MCF 10A (cell line): ENCODE measurements at regions of chr20 and their contacts with region 1.

Region 1: GRCh38 chr20:41339507-41340326 is 904 bp upstream of the LPIN3 start:
- DNase-seq: peak; percentile 89
- H3K4me3 Mint-ChIP-seq: peak overlapping the region; percentile 80
- H3K27ac Mint-ChIP-seq: peak overlapping the region; percentile 96
- H3K4me1 Mint-ChIP-seq: peaks cover 33% of the 10 kb centered on the region
- H3K27me3 Mint-ChIP-seq: no peaks in the 10 kb centered on the region
- CTCF ChIP-seq: peak; percentile 99

Region 2: DNA sequence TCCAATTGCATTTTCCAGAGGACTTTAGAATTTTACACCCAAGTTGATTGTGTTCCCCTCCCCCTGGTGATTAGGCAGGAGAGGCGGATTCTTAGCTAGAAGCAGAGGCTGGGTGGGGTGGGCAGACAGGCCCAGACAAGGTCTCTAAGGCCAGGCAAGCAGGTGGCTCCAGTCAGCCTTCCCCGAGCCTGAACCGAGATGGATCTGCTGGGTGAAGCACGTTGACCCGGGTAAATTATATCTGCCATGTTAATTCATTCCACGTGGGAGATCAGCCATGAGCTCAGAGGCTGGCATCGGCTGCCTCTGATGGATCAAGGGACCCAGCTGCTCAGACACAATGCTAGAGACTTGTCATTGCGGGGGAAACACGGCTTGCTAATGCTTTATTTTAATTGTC is 491.2 kb before region 1 on chr20:
- CTCF ChIA-PET with region 1: no interaction called
- POLR2A ChIA-PET with region 1: no interaction called
- intact Hi-C with region 1: no loop called
- DNase-seq: no peak
- H3K4me3 Mint-ChIP-seq: no peak overlapping the region
- H3K27ac Mint-ChIP-seq: no peak overlapping the region
- H3K4me1 Mint-ChIP-seq: no peaks in the 10 kb centered on the region
- H3K27me3 Mint-ChIP-seq: no peaks in the 10 kb centered on the region
- CTCF ChIP-seq: no peak

Region 3: GRCh38 chr20:41136680-41137613 is 202.8 kb before region 1 on chr20 and contains the start of gene PLCG1:
- CTCF ChIA-PET with region 1: interaction called, 110 read pairs
- POLR2A ChIA-PET with region 1: interaction called, 63 read pairs
- intact Hi-C with region 1: loop called (anchors 1 kb)
- DNase-seq: peak; percentile 83
- H3K4me3 Mint-ChIP-seq: peak within 1 kb of the TSS; percentile 79
- H3K27ac Mint-ChIP-seq: peak within 1 kb of the TSS; percentile 42
- H3K4me1 Mint-ChIP-seq: peaks cover 61% of the 10 kb centered on the region
- H3K27me3 Mint-ChIP-seq: no peaks in the 10 kb centered on the region
- CTCF ChIP-seq: no peak
- total RNA-seq, gene PLCG1: 33.2 and 48.1 TPM in 2 replicates

Region 4: GRCh38 chr20:41200446-41201202 is 139.1 kb before region 1 on chr20:
- CTCF ChIA-PET with region 1: interaction called, 10 read pairs
- POLR2A ChIA-PET with region 1: interaction called, 3 read pairs
- intact Hi-C with region 1: no loop called
- DNase-seq: no peak
- H3K4me3 Mint-ChIP-seq: no peak overlapping the region
- H3K27ac Mint-ChIP-seq: no peak overlapping the region
- H3K4me1 Mint-ChIP-seq: no peaks in the 10 kb centered on the region
- H3K27me3 Mint-ChIP-seq: no peaks in the 10 kb centered on the region
- CTCF ChIP-seq: no peak

Region 5: GRCh38 chr20:41249406-41250281 is 90.1 kb before region 1 on chr20:
- CTCF ChIA-PET with region 1: interaction called, 37 read pairs
- POLR2A ChIA-PET with region 1: interaction called, 7 read pairs
- intact Hi-C with region 1: loop called (anchors 1 kb)
- DNase-seq: peak; percentile 82
- H3K4me3 Mint-ChIP-seq: peak overlapping the region; percentile 26
- H3K27ac Mint-ChIP-seq: peak overlapping the region; percentile 97
- H3K4me1 Mint-ChIP-seq: peaks cover 41% of the 10 kb centered on the region
- H3K27me3 Mint-ChIP-seq: no peaks in the 10 kb centered on the region
- CTCF ChIP-seq: peak; percentile 21

Region 6: GRCh38 chr20:41329435-41330342 is 10.0 kb before region 1 on chr20:
- CTCF ChIA-PET with region 1: interaction called, 59 read pairs
- POLR2A ChIA-PET with region 1: interaction called, 48 read pairs
- intact Hi-C with region 1: no loop called
- DNase-seq: peak; percentile 92
- H3K4me3 Mint-ChIP-seq: peak overlapping the region; percentile 28
- H3K27ac Mint-ChIP-seq: peak overlapping the region; percentile 89
- H3K4me1 Mint-ChIP-seq: peaks cover 15% of the 10 kb centered on the region
- H3K27me3 Mint-ChIP-seq: no peaks in the 10 kb centered on the region
- CTCF ChIP-seq: no peak

Region 7: DNA sequence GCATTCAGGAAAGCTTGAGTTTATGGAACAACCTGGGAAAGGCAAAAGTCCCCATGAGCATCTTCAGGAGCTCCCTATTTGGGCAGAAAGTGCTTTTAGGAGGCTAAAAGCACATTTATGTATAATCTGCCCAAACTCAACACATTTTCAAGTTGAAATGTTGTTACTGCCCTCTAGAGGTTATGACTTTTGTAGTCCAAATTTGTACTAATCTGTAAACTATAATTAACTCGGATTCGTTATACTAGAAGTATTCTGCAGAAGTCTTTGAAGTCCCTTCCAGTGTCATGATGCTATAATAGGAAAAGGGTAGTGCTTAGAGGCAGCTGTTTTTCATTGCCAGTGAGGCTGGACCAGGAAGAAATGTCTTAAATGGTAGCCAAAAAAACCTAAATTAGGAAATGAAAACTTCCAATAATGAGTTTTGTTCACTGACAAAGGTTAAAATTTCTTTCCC is 71.7 kb after region 1 on chr20:
- CTCF ChIA-PET with region 1: interaction called, 22 read pairs
- POLR2A ChIA-PET with region 1: no interaction called
- intact Hi-C with region 1: loop called (anchors 1 kb)
- DNase-seq: peak; percentile 9
- H3K4me3 Mint-ChIP-seq: no peak overlapping the region
- H3K27ac Mint-ChIP-seq: no peak overlapping the region
- H3K4me1 Mint-ChIP-seq: no peaks in the 10 kb centered on the region
- H3K27me3 Mint-ChIP-seq: no peaks in the 10 kb centered on the region
- CTCF ChIP-seq: peak; percentile 41

Region 8: DNA sequence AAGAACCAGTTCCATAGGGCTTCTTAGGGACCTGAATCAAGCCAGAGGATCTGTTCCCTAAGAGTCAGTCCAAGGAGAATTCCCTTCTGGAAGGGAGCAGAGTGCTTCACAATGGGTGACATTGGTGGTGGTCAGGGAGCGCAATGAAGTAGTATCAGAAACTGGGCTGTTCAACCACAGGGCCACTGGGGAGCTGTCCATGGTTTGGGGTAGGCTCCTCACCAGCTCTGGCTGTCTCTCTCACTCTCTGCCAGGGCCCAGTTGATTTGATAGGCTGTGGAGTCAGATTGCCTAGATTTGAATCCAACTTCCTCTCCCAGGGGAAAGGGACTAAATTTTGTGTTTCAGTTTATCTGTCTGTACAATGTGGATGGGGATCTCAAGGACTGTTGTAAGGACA is 315.2 kb after region 1 on chr20:
- CTCF ChIA-PET with region 1: no interaction called
- POLR2A ChIA-PET with region 1: no interaction called
- intact Hi-C with region 1: no loop called
- DNase-seq: peak; percentile 25
- H3K4me3 Mint-ChIP-seq: no peak overlapping the region
- H3K27ac Mint-ChIP-seq: no peak overlapping the region
- H3K4me1 Mint-ChIP-seq: no peaks in the 10 kb centered on the region
- H3K27me3 Mint-ChIP-seq: peaks cover 57% of the 10 kb centered on the region
- CTCF ChIP-seq: no peak

Region 9: DNA sequence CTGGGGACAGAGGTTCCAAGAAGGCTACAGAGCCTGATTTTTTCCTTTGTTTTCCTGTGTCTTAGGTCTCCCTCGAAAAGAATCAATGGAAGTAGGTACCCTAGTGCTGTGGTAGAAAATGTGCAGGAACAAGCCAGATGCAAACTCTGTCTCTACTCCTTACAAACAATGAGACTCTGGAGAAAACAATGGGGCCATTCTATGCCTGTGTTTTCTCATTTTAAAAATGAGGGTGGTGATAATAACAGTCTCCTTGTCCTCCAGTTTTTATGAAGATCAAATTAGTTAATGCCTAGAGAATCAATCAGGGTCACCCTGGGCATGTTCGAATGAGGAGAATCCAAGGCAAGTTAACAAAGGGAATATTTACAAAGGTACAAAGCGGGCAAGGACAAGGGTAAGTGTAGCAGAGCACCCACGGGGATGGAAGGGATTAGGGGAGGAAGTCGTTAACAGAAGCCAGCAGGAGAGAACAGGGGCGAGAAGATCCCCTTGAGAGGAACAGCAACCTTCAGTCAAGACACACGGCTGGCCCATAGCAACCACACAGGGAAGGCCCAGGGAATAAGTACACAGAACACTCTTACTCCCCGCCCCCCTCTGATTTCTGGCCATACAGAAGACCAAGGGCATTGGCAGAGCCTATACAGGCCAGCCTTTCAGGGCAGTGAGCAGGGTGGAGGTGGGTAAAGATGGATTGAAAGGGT is 1507.2 kb after region 1 on chr20:
- CTCF ChIA-PET with region 1: no interaction called
- POLR2A ChIA-PET with region 1: no interaction called
- intact Hi-C with region 1: no loop called
- DNase-seq: no peak
- H3K4me3 Mint-ChIP-seq: no peak overlapping the region
- H3K27ac Mint-ChIP-seq: no peak overlapping the region
- H3K4me1 Mint-ChIP-seq: no peaks in the 10 kb centered on the region
- H3K27me3 Mint-ChIP-seq: no peaks in the 10 kb centered on the region
- CTCF ChIP-seq: no peak